ENCODE measurements at regions of chr12 and their contacts with region 1.

Region 1: DNA sequence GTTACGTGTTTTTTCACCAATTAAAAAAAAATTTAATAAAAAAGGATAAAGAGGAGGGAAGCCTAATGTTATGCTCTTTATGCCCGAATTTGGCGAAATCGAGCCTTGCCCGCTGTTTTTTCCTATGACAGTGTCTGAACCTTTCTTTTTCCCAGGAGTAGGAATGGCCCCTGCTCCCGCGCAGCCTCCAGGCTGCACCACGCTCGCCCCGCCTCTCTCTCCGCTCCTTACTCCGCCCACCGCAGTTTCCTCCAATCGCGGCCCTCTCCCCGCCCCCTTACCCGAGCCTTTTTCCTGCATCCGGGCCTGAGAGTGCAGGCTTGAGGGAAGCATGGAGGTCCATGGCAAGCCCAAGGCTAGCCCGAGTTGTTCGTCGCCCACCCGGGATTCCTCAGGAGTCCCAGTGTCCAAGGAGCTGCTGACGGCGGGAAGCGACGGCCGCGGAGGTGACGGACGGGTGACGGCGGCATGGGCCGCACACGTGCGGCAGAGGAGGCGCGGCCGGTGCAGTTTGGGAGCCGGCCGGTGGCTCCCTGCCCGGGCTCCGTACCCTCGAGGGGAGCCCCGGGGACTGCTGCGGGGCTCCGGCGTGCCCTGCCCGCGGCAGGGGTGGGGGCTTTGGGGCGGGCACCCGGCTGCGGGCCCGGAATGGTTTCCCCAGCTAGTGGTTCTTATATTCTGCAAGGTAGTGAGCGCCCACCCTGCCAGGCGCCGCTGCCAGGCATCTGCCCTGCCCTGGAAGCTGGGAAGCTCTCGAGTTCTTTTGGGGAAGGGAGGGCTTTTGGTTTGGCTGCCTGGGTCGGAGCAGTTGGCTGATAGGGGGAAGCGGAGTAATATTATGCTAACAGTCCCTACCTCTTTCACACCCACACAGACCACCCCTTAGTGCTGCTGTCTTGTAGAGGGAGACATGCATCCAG is at the start of gene NOPCHAP1:
- DNase-seq: peak; percentile 96
- H3K4me3 ChIP-seq: peak within 1 kb of the TSS; percentile 87
- H3K27ac ChIP-seq: peak within 1 kb of the TSS; percentile 78
- H3K4me1 ChIP-seq: peaks cover 4% of the 10 kb centered on the region
- H3K27me3 ChIP-seq: no peaks in the 10 kb centered on the region
- CTCF ChIP-seq: no peak
- total RNA-seq, gene NOPCHAP1: 31.2 and 32.5 TPM in 2 replicates

Region 2: DNA sequence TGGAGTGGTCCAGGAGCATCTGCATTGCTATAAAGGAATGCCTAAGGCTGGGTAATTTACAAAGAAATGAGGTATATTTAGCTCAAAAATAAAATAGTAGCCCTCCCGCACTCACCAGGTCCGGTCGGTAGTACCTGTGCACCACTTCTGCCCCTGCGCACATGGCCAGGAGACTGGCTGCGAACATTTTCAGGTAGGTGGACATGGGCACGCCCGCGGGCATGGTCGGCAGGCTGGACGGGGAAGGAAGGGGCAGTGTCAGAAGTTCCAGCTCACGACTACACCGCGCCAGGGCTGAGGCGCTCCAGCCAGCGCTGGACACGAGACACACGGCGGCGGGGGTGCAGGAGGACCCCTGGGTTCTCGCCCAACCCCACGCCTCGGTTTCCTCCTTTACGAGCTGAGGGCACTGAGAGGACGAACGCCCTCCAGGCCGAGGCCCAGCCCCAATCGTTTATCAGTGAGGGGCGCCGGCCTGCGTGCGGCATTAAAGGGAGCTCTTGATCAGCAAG is 1029.7 kb before region 1 on chr12:
- CTCF ChIA-PET with region 1: no interaction called
- POLR2A ChIA-PET with region 1: interaction called, 11 read pairs
- intact Hi-C with region 1: no loop called
- DNase-seq: no peak
- H3K4me3 ChIP-seq: peak overlapping the region; percentile 96
- H3K27ac ChIP-seq: peak overlapping the region; percentile 91
- H3K4me1 ChIP-seq: peaks cover 4% of the 10 kb centered on the region
- H3K27me3 ChIP-seq: no peaks in the 10 kb centered on the region
- CTCF ChIP-seq: no peak

Region 3: DNA sequence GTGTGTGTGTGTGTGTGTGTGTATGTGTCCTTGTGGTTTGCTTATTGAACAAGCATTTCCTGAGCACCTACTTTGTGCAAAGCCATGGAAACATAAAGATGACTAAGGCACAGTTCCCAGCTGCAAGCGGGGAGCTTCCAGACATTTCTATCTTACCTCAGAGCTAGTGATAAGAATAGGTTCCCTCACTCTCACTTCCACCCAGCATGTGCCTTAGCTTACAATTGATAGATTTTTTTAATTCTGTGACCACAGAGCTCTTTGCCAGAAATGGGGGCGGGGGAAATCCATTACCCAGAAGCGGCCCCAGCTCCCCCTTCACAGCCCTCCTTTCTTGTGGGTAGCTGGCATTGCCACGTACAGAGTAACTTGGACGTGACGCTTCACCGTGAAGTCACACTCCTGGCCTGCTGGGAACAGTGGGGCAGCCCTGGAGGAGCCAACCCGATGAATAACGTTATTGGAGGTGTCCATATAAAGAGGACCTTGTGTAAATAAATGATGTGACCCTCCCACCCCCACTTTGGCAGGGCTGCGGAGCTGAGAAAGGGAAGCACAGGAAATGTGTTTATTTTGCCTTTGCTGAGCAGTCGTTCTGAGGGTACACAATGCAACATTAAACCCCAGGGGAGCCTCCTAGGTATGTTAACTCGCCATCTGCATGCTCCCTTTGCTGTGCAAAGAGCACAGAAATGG is 290.7 kb before region 1 on chr12:
- CTCF ChIA-PET with region 1: no interaction called
- POLR2A ChIA-PET with region 1: no interaction called
- intact Hi-C with region 1: no loop called
- DNase-seq: no peak
- H3K4me3 ChIP-seq: no peak overlapping the region
- H3K27ac ChIP-seq: no peak overlapping the region
- H3K4me1 ChIP-seq: no peaks in the 10 kb centered on the region
- H3K27me3 ChIP-seq: no peaks in the 10 kb centered on the region
- CTCF ChIP-seq: no peak

Region 4: DNA sequence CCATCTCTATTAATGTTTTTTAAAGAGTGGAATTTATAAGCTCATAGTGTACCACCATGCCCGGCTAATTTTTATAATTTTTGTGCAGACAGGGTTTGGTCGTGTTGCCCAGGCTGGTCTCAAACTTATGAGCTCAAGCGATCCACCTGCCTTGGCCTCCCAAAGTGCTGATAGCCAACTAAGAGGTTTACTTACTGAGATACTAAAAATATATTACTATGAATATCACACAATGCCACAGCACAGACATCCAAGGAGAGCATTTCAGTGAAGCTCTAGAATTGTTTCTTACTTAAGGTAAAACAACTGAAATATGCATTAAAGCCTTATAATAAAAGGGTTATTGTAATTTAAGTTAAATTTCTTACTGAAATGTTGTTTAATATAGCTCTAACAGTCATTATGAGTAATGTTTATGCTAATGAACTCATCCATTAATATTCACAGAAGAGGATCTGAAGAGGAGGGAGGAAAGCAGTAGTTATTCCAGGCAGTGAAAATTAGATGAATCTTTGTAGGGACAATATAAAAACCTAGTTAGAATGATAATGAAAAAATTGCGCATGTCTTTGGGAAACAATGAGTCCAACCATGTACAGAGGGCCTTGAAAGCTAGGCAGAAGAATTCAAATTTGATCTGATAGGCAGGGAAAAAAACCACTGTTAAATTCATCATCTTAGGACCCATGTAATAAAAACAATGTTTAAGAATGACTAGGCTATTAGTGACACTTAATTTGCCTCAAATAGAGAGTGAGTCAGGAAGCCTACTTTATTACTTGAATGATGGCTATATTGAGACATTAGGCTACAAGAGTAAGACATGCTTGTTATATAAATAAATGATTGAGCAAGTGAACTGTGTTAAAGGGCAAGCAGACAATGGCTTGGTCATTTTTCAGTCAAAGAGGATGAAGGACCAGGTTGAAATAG is 127.4 kb before region 1 on chr12:
- CTCF ChIA-PET with region 1: no interaction called
- POLR2A ChIA-PET with region 1: no interaction called
- intact Hi-C with region 1: no loop called
- DNase-seq: no peak
- H3K4me3 ChIP-seq: no peak overlapping the region
- H3K27ac ChIP-seq: no peak overlapping the region
- H3K4me1 ChIP-seq: no peaks in the 10 kb centered on the region
- H3K27me3 ChIP-seq: no peaks in the 10 kb centered on the region
- CTCF ChIP-seq: no peak

Region 5: DNA sequence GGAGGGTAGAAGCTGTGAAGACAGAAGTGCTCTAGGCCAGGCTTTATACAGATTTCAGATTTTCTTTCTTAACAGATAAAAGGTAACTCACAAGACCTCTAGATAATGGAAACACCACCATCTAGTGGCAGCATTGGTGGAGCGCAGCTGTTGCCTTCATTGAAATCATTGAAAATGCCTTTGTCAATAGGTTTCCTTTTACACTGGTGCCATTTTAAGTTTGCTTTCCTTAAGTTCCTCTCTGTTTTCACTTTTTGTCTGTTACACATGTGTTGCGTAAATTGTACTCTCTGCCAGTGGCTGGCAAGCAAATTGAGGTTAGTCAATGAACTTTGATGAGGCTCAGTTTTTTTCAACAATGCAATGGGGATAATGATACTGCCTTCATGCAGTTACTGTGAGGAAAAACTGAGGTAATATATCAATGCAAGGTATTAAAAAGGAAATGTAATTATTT is 66.9 kb after region 1 on chr12:
- CTCF ChIA-PET with region 1: no interaction called
- POLR2A ChIA-PET with region 1: no interaction called
- intact Hi-C with region 1: loop called (anchors 5 kb)
- DNase-seq: peak; percentile 84
- H3K4me3 ChIP-seq: no peak overlapping the region
- H3K27ac ChIP-seq: no peak overlapping the region
- H3K4me1 ChIP-seq: no peaks in the 10 kb centered on the region
- H3K27me3 ChIP-seq: no peaks in the 10 kb centered on the region
- CTCF ChIP-seq: peak; percentile 94

Region 6: DNA sequence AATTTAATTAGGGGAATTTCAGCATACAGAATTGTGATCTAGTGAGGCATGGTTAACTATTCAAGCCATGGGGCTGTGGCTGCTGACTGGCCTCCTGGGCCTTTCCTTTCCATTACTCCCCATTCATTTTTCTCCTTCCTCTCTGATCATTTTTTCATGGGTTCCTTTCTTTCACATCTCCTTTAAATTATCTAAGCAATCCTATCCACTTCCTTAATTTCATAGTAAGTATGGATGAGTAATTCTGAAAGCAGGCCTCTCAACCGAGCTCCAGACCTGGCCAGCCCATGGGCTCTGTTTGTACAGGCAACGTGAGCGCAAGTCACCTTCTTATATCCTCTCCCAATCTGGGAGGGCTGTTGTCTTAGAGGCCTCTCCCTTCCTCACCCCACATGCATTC is 1248.2 kb after region 1 on chr12:
- CTCF ChIA-PET with region 1: no interaction called
- POLR2A ChIA-PET with region 1: interaction called, 22 read pairs
- intact Hi-C with region 1: no loop called
- DNase-seq: no peak
- H3K4me3 ChIP-seq: no peak overlapping the region
- H3K27ac ChIP-seq: no peak overlapping the region
- H3K4me1 ChIP-seq: no peaks in the 10 kb centered on the region
- H3K27me3 ChIP-seq: no peaks in the 10 kb centered on the region
- CTCF ChIP-seq: no peak